ENCODE measurements at regions of chr6 and their contacts with region 1.

Region 1: GRCh38 chr6:108260809-108261569 is at the start of gene SNX3:
- DNase-seq: peak; percentile 76 to 95 (median 85)
- ATAC-seq: peak; percentile 79
- H3K4me3 ChIP-seq: peak within 1 kb of the TSS; percentile 64 to 76
- H3K4me3 Mint-ChIP-seq: peak within 1 kb of the TSS; percentile 89
- H3K27ac ChIP-seq: peak within 1 kb of the TSS; percentile 82 to 95
- H3K27ac Mint-ChIP-seq: peak within 1 kb of the TSS; percentile 97
- H3K4me1 ChIP-seq: peaks cover 17% of the 10 kb centered on the region
- H3K4me1 Mint-ChIP-seq: peaks cover 36% of the 10 kb centered on the region
- H3K27me3 ChIP-seq: no peaks in the 10 kb centered on the region
- H3K27me3 Mint-ChIP-seq: no peaks in the 10 kb centered on the region
- CTCF ChIP-seq: no peak
- total RNA-seq, gene SNX3: 37.0 to 40.7 TPM

Region 2: DNA sequence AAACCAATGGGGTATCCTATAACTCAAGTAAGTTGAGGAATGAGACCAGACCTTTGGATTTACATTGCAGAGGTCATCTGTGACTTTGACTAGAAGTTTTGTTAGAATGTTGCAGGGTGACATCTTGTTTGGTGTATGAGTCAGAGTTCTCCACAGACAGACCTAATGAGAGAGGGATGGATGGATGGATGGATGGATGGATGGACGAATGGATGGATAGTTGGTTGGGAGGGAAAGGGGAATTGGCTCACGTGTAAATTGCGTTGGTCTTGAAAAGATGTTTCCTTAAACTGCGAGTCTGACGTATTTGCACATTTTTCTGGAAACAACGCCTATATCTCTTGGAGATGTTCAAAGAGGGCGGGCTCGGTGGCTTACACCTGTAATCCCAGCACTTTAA is 1234.0 kb before region 1 on chr6:
- CTCF ChIA-PET with region 1: no interaction called
- POLR2A ChIA-PET with region 1: interaction called, 3 read pairs
- intact Hi-C with region 1: loop called in 1 of 2 experiments (anchors 5 kb)
- DNase-seq: no peak
- ATAC-seq: no peak
- H3K4me3 ChIP-seq: no peak overlapping the region
- H3K4me3 Mint-ChIP-seq: peak overlapping the region; percentile 96
- H3K27ac ChIP-seq: no peak overlapping the region
- H3K27ac Mint-ChIP-seq: peak overlapping the region; percentile 38
- H3K4me1 ChIP-seq: peaks cover 10% of the 10 kb centered on the region
- H3K4me1 Mint-ChIP-seq: peaks cover 28% of the 10 kb centered on the region
- H3K27me3 ChIP-seq: no peaks in the 10 kb centered on the region
- H3K27me3 Mint-ChIP-seq: no peaks in the 10 kb centered on the region
- CTCF ChIP-seq: no peak

Region 3: GRCh38 chr6:107941627-107942026 is 319.4 kb before region 1 on chr6:
- CTCF ChIA-PET with region 1: no interaction called
- POLR2A ChIA-PET with region 1: no interaction called
- intact Hi-C with region 1: no loop called
- DNase-seq: no peak
- ATAC-seq: no peak
- H3K4me3 ChIP-seq: no peak overlapping the region
- H3K4me3 Mint-ChIP-seq: no peak overlapping the region
- H3K27ac ChIP-seq: no peak overlapping the region
- H3K27ac Mint-ChIP-seq: no peak overlapping the region
- H3K4me1 ChIP-seq: peaks cover 15% of the 10 kb centered on the region
- H3K4me1 Mint-ChIP-seq: peaks cover 52% of the 10 kb centered on the region
- H3K27me3 ChIP-seq: no peaks in the 10 kb centered on the region
- H3K27me3 Mint-ChIP-seq: no peaks in the 10 kb centered on the region
- CTCF ChIP-seq: no peak

Region 4: GRCh38 chr6:108074359-108075144 is 186.4 kb before region 1 on chr6 and contains the start of gene OSTM1:
- CTCF ChIA-PET with region 1: no interaction called
- POLR2A ChIA-PET with region 1: no interaction called
- intact Hi-C with region 1: loop called (anchors 1 to 2 kb)
- DNase-seq: peak; percentile 89 to 97 (median 94)
- ATAC-seq: peak; percentile 96
- H3K4me3 ChIP-seq: peak within 1 kb of the TSS; percentile 98 to 99
- H3K4me3 Mint-ChIP-seq: peak within 1 kb of the TSS; percentile 89
- H3K27ac ChIP-seq: peak within 1 kb of the TSS; percentile 85 to 88
- H3K27ac Mint-ChIP-seq: peak within 1 kb of the TSS; percentile 88
- H3K4me1 ChIP-seq: peaks cover 19% of the 10 kb centered on the region
- H3K4me1 Mint-ChIP-seq: peaks cover 29% of the 10 kb centered on the region
- H3K27me3 ChIP-seq: no peaks in the 10 kb centered on the region
- H3K27me3 Mint-ChIP-seq: peaks cover 2% of the 10 kb centered on the region
- CTCF ChIP-seq: no peak
- total RNA-seq, gene OSTM1: 20.0 to 25.0 TPM

Region 5: GRCh38 chr6:108294727-108295625 is 34.0 kb after region 1 on chr6 and contains the start of gene AFG1L:
- CTCF ChIA-PET with region 1: interaction called, 3 read pairs
- POLR2A ChIA-PET with region 1: interaction called, 31 read pairs
- intact Hi-C with region 1: loop called (anchors 1 kb)
- DNase-seq: peak; percentile 72 to 92 (median 86)
- ATAC-seq: peak; percentile 92
- H3K4me3 ChIP-seq: peak within 1 kb of the TSS; percentile 94 to 96
- H3K4me3 Mint-ChIP-seq: peak within 1 kb of the TSS; percentile 89
- H3K27ac ChIP-seq: peak within 1 kb of the TSS; percentile 94 to 95
- H3K27ac Mint-ChIP-seq: peak within 1 kb of the TSS; percentile 97
- H3K4me1 ChIP-seq: peaks cover 13% of the 10 kb centered on the region
- H3K4me1 Mint-ChIP-seq: peaks cover 26% of the 10 kb centered on the region
- H3K27me3 ChIP-seq: no peaks in the 10 kb centered on the region
- H3K27me3 Mint-ChIP-seq: no peaks in the 10 kb centered on the region
- CTCF ChIP-seq: no peak
- total RNA-seq, gene AFG1L: 3.3 to 4.0 TPM

Region 6: GRCh38 chr6:108323710-108324439 is 62.9 kb after region 1 on chr6:
- CTCF ChIA-PET with region 1: no interaction called
- POLR2A ChIA-PET with region 1: no interaction called
- intact Hi-C with region 1: no loop called
- DNase-seq: no peak
- ATAC-seq: no peak
- H3K4me3 ChIP-seq: no peak overlapping the region
- H3K4me3 Mint-ChIP-seq: no peak overlapping the region
- H3K27ac ChIP-seq: no peak overlapping the region
- H3K27ac Mint-ChIP-seq: no peak overlapping the region
- H3K4me1 ChIP-seq: no peaks in the 10 kb centered on the region
- H3K4me1 Mint-ChIP-seq: no peaks in the 10 kb centered on the region
- H3K27me3 ChIP-seq: no peaks in the 10 kb centered on the region
- H3K27me3 Mint-ChIP-seq: no peaks in the 10 kb centered on the region
- CTCF ChIP-seq: no peak

Region 7: GRCh38 chr6:109482905-109483735 is 1222.1 kb after region 1 on chr6 and contains the start of gene ZBTB24:
- CTCF ChIA-PET with region 1: no interaction called
- POLR2A ChIA-PET with region 1: no interaction called
- intact Hi-C with region 1: loop called in 1 of 2 experiments (anchors 2 kb)
- DNase-seq: peak; percentile 75 to 96 (median 88)
- ATAC-seq: peak; percentile 85
- H3K4me3 ChIP-seq: peak within 1 kb of the TSS; percentile 65 to 69
- H3K4me3 Mint-ChIP-seq: peak within 1 kb of the TSS; percentile 95
- H3K27ac ChIP-seq: peak within 1 kb of the TSS; percentile 49 to 62
- H3K27ac Mint-ChIP-seq: peak within 1 kb of the TSS; percentile 89
- H3K4me1 ChIP-seq: peaks cover 37% of the 10 kb centered on the region
- H3K4me1 Mint-ChIP-seq: peaks cover 50% of the 10 kb centered on the region
- H3K27me3 ChIP-seq: no peaks in the 10 kb centered on the region
- H3K27me3 Mint-ChIP-seq: no peaks in the 10 kb centered on the region
- CTCF ChIP-seq: no peak
- total RNA-seq, gene ZBTB24: 10.9 to 11.2 TPM